Heart right ventricle (tissue), 16 donors: ENCODE measurements at regions of chr13 and their contacts with region 1.

Region 1: GRCh38 chr13:98523455-98524102 is 53.3 kb downstream of the STK24 start:
- DNase-seq: no peak
- ATAC-seq: no peak
- H3K4me3 ChIP-seq: no peak overlapping the region
- H3K27ac ChIP-seq: no peak overlapping the region
- H3K4me1 ChIP-seq: peaks cover 28 to 88% (median 70%) of the 10 kb centered on the region in 9 donors
- H3K27me3 ChIP-seq: no peaks in the 10 kb centered on the region
- CTCF ChIP-seq: no peak

Region 2: GRCh38 chr13:98484289-98485219 is 39.0 kb before region 1 on chr13:
- intact Hi-C with region 1: no loop called
- DNase-seq: peak; percentile 37 to 72
- ATAC-seq: peak; percentile 46 to 78 (median 65)
- H3K4me3 ChIP-seq: peak overlapping the region in 1 of 10 donors; percentile 13
- H3K27ac ChIP-seq: peak overlapping the region; percentile 4 to 83 (median 66)
- H3K4me1 ChIP-seq: peaks cover 28 to 99% (median 92%) of the 10 kb centered on the region in 9 donors
- H3K27me3 ChIP-seq: no peaks in the 10 kb centered on the region
- CTCF ChIP-seq: no peak

Region 3: DNA sequence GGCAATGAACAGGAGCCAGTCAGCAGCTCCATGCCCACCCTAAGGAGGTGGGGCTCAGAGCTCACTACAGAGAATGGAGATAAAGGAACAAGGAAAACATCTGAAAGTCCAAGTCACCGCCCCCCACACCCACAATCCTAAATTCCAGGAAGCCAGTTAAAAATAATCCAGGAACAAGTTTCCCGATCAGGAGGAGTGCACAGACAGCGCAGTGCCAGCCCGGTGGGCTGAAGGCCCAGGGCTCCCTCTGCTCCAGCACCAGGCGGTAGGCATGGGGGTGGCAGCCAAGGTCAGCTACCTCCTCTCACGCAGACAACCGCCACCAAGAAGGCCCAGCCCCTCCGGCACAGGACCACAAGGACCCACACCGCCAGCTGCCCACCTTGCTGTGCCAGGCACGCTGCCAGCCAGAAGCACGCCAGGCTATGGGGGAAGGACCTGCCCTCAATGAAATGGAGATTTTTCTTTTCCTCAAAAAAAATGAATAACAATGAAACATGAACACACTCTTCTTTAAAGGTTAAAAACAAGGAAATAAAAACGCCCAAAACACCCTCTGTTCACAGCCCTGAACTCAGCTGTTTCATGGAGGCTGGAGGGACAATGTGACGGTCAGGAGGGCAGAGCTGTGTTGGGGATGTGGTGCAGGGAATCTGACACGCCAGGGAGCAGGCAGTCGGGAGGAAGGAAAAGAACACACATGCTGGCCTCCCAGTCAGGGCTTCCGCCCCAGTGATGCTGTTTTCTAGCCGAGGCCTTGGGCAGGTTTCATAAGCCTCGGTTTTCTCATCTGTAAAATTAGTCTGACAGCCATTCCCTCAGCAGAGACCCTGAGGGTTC is 42.4 kb after region 1 on chr13:
- intact Hi-C with region 1: loop called in 1 of 10 experiments (anchors 5 kb)
- DNase-seq: peak; percentile 51 to 55
- ATAC-seq: peak; percentile 74 to 95 (median 88)
- H3K4me3 ChIP-seq: peak overlapping the region in 5 of 10 donors; percentile 11 to 30 (median 27)
- H3K27ac ChIP-seq: peak overlapping the region; percentile 1 to 85 (median 77)
- H3K4me1 ChIP-seq: peaks cover 14 to 97% (median 79%) of the 10 kb centered on the region in 9 donors
- H3K27me3 ChIP-seq: no peaks in the 10 kb centered on the region
- CTCF ChIP-seq: no peak

Region 4: GRCh38 chr13:98731925-98732324 is 208.3 kb after region 1 on chr13:
- intact Hi-C with region 1: no loop called
- DNase-seq: no peak
- ATAC-seq: no peak
- H3K4me3 ChIP-seq: no peak overlapping the region
- H3K27ac ChIP-seq: no peak overlapping the region
- H3K4me1 ChIP-seq: no peaks in the 10 kb centered on the region
- H3K27me3 ChIP-seq: no peaks in the 10 kb centered on the region
- CTCF ChIP-seq: no peak